Dorsolateral prefrontal cortex (tissue), 120 donors: ENCODE measurements at regions of chr20 and their contacts with region 1.

Region 1: DNA sequence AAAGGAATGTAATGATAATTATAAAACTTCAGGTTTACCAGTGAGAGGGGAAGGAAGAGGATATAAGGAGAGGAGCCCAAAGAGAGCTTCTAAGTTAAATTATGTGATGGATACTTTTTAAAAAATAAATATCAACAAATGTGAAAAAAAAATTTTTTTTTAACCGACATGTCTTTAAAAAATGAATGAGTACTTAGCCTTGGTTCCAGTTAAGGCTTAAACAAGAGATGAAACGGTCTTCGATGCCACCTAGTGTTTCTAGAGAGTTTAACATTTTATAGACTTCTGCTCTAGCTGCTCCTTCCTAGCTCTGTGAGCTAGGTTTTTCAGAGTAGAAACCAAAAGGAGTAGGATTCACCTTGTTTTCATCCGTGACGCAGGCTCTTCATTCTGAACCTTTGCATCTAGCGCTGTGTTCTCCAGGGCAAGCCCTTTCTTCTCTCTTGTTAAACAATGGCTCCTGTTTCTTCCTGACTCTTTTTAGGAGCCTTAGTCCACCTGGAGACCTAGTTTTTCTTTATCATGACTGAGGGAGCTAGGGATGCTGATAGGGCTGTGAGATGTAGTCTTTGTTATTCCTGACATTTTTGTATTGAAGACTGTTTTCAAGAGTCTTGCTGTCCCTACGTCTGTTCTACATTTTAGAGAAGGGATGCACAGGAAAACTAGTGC is 42.4 kb upstream of the GNRH2 start:
- DNase-seq: peak in 1 of 10 donors; percentile 9
- H3K4me3 ChIP-seq: no peak overlapping the region
- H3K27ac ChIP-seq: peak overlapping the region in 1 of 59 donors; percentile 67
- H3K27me3 ChIP-seq: no peaks in the 10 kb centered on the region
- CTCF ChIP-seq: peak in 55 of 56 donors; percentile 30 to 88 (median 69)

Region 2: DNA sequence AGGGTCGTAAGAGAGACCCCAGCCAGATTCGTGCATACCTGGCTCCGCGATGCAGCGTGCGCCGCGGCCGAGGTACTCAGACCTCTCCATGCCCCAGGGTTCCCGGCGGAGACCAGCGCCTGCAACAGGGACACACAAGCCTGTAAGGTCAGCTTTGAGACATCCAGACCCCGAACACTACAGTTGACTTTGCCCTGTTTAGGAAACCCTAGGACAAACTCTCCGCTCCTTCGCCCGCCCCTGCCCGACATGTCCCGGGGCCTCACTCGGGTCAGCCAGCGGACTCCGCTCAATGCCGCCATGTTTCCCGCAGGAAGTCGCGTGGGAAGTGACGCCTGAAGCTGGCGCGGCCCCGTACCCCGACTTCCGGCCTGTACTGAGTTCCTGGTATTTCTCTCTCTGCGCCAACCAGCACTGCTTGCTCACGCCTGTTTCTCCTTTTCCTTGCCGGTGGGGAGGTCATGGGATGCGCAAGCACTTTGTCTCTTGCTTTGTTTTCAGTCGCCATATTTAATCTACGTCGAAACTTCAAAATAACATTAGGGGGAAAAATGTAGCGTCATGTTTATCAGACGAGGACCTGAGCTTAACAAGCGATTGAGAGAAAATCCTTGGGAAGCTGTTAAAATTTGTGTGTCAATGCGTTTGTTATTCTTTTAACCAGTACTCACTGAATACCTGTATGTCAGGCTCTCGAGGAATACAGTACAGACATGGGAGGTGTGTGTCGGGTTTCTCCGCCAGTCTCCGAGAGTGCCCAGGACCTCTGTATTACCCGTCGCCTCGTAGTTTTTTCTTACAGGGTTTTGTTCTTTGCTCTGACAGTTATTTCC is 336.9 kb before region 1 on chr20 and contains the start of gene IDH3B:
- intact Hi-C with region 1: loop called in 1 of 2 experiments (anchors 10 kb)
- DNase-seq: peak; percentile 92 to 98 (median 96)
- H3K4me3 ChIP-seq: peak within 1 kb of the TSS; percentile 51 to 100 (median 92)
- H3K27ac ChIP-seq: peak within 1 kb of the TSS; percentile 52 to 99 (median 93)
- H3K27me3 ChIP-seq: no peaks in the 10 kb centered on the region
- CTCF ChIP-seq: peak in 29 of 56 donors; percentile 4 to 56 (median 22)
- total RNA-seq, gene IDH3B: 56.2 to 127 (median 100.0) TPM

Region 3: GRCh38 chr20:2865630-2866029 is 135.4 kb before region 1 on chr20:
- intact Hi-C with region 1: loop called (anchors 5 to 10 kb)
- DNase-seq: no peak
- H3K4me3 ChIP-seq: no peak overlapping the region
- H3K27ac ChIP-seq: no peak overlapping the region
- H3K27me3 ChIP-seq: no peaks in the 10 kb centered on the region
- CTCF ChIP-seq: peak in 22 of 56 donors; percentile 7 to 42 (median 28)

Region 4: GRCh38 chr20:2873010-2873746 is 127.8 kb before region 1 on chr20 and contains the start of gene PTPRA:
- intact Hi-C with region 1: loop called (anchors 5 to 10 kb)
- DNase-seq: peak; percentile 93 to 97 (median 95)
- H3K4me3 ChIP-seq: peak within 1 kb of the TSS; percentile 62 to 100 (median 94)
- H3K27ac ChIP-seq: peak within 1 kb of the TSS in 58 of 59 donors; percentile 43 to 95 (median 88)
- H3K27me3 ChIP-seq: no peaks in the 10 kb centered on the region
- CTCF ChIP-seq: peak in 8 of 56 donors; percentile 0 to 26 (median 7)
- total RNA-seq, gene PTPRA: 105 to 214 (median 150) TPM

Region 5: GRCh38 chr20:2914160-2914559 is 86.8 kb before region 1 on chr20:
- intact Hi-C with region 1: loop called in 1 of 2 experiments (anchors 5 kb)
- DNase-seq: no peak
- H3K4me3 ChIP-seq: no peak overlapping the region
- H3K27ac ChIP-seq: no peak overlapping the region
- H3K27me3 ChIP-seq: no peaks in the 10 kb centered on the region
- CTCF ChIP-seq: peak in 43 of 56 donors; percentile 12 to 62 (median 33)